ENCODE measurements at regions of chr14 and their contacts with region 1.

Region 1: DNA sequence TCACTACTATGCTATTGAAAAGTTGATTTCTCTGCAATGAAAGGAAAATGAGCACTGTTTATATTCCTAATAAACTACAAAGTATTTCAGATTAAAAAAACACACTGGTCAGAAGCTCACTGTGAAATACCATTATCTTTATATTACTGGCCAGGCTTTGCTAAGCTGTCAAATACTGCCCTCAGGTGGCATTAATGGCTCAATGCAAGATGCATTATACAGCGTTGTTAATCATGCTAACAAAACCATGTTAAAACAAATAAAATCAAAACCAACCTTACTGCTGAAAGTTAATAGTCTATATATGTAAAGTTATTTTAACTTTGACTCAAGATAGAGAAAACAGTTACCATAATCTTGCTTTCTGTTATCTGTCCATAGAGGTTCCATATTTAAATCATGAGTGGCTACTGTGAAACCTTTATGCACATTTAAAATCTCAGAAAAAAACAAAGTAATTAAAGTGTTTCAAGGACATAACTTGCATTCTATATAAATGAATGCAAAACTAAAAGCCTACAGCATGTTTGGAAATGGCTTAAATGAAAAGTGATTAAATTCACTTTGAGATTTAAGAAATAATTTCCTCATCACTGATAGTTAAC is 121.7 kb downstream of the RALGAPA1 start:
- DNase-seq: peak; percentile 80
- ATAC-seq: peak; percentile 93
- H3K4me3 ChIP-seq: no peak overlapping the region
- H3K27ac ChIP-seq: no peak overlapping the region
- H3K4me1 ChIP-seq: no peaks in the 10 kb centered on the region
- H3K27me3 ChIP-seq: no peaks in the 10 kb centered on the region
- CTCF ChIP-seq: peak; percentile 97

Region 2: GRCh38 chr14:35140718-35141581 is 546.5 kb before region 1 on chr14:
- CTCF ChIA-PET with region 1: no interaction called
- POLR2A ChIA-PET with region 1: interaction called, 4 read pairs
- intact Hi-C with region 1: loop called (anchors 5 kb)
- DNase-seq: peak; percentile 61
- ATAC-seq: peak; percentile 20; the same call in 1 of the 2 replicates
- H3K4me3 ChIP-seq: no peak overlapping the region
- H3K27ac ChIP-seq: no peak overlapping the region
- H3K4me1 ChIP-seq: no peaks in the 10 kb centered on the region
- H3K27me3 ChIP-seq: no peaks in the 10 kb centered on the region
- CTCF ChIP-seq: peak; percentile 73

Region 3: DNA sequence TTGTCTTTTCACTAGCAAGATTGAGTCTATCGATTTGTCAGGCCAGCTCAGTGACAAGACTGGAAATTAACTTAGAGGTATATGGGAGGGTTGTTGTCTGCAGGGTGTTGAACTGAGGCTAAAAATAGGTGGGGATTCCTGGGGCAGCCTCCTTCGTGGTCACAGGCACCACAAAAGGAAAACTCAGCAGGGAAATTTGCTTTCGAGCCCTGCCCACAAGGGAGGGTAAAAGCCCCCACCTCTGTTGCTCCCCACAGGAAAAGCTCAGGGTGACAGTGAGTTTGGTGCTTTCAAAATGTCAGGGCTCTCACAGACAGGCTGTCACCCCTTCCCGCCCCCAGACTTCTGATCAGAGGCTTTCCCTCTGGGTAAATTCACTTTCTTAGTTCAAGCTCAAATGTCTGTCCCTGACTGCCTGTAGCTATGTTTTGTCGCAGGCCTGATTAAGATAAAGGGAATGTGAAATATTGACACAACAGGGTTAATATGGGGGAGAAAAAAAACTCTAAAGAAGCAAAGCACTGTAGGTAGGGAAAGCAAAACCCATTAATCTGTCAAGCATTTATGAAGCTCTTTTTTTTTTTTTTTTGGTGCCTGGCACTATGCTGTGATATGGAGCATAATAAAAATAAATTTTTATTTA is 271.2 kb before region 1 on chr14:
- CTCF ChIA-PET with region 1: interaction called, 4 read pairs
- POLR2A ChIA-PET with region 1: no interaction called
- intact Hi-C with region 1: loop called (anchors 1 kb)
- DNase-seq: peak; percentile 55
- ATAC-seq: 0 out of 2 replicates have a peak, but pooled peaks have one; percentile 3
- H3K4me3 ChIP-seq: no peak overlapping the region
- H3K27ac ChIP-seq: no peak overlapping the region
- H3K4me1 ChIP-seq: peaks cover 25% of the 10 kb centered on the region
- H3K27me3 ChIP-seq: no peaks in the 10 kb centered on the region
- CTCF ChIP-seq: no peak

Region 4: GRCh38 chr14:35533357-35534207 is 153.9 kb before region 1 on chr14 and contains the start of gene INSM2:
- CTCF ChIA-PET with region 1: interaction called, 5 read pairs
- POLR2A ChIA-PET with region 1: no interaction called
- intact Hi-C with region 1: loop called (anchors 1 kb)
- DNase-seq: peak; percentile 69
- ATAC-seq: peak; percentile 89
- H3K4me3 ChIP-seq: peak within 1 kb of the TSS; percentile 75
- H3K27ac ChIP-seq: no peak within 1 kb of the TSS
- H3K4me1 ChIP-seq: no peaks in the 10 kb centered on the region; the same call in 1 of the 2 replicates
- H3K27me3 ChIP-seq: peaks cover 58% of the 10 kb centered on the region
- CTCF ChIP-seq: 0 out of 2 replicates have a peak, but pooled peaks have one; percentile 8
- total RNA-seq, gene INSM2: 0.07 TPM in 1 of 2 replicates, not detected in the other

Region 5: GRCh38 chr14:35814371-35815005 is 127.1 kb after region 1 on chr14:
- CTCF ChIA-PET with region 1: interaction called, 4 read pairs
- POLR2A ChIA-PET with region 1: no interaction called
- intact Hi-C with region 1: loop called (anchors 5 kb)
- DNase-seq: peak; percentile 74
- ATAC-seq: peak; percentile 64
- H3K4me3 ChIP-seq: no peak overlapping the region
- H3K27ac ChIP-seq: no peak overlapping the region
- H3K4me1 ChIP-seq: no peaks in the 10 kb centered on the region
- H3K27me3 ChIP-seq: no peaks in the 10 kb centered on the region
- CTCF ChIP-seq: peak; percentile 80